ENCODE measurements at regions of chr1 and their contacts with region 1.

Region 1: DNA sequence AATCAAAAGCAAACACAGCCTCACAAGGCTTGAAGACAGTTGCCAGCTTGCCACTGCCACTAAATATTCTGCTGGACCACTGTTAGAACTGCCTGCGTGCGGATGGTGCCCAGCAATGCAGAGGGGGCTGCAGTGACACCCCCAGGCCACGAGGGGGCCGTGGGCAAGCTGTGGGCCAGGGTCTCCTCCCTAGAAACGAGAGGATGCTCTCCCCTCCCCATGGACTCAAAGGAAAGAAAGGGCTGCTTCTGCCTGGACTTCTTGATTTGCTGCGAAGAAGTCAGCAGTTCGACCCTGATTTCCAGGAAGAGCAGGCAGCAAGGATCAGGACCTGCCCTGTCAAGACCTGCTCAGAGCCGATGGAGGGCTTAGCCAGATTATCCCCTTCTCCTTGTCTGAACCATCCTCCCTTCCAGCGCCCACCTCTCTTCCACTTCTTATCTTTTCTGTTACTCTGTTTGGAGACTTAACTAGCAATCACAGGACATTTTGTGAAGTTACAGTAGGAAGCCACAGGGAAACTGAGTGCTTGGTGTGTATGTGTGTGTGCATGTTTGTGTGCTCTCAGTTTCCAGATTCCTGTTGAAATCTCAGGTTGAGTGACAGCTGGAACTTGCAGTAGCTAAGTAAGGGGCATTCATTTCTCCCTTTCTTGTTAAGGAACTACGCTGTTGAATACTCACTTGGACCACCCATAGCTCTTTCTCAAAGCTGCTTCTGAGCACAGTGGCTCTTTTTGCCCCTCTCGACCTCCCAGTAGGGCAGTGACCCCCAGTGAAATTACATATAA is 2.7 kb downstream of the MAN1C1 start:
- DNase-seq: peak; percentile 68
- ATAC-seq: no peak
- H3K4me3 Mint-ChIP-seq: peak overlapping the region; percentile 94
- H3K27ac Mint-ChIP-seq: peak overlapping the region; percentile 95
- H3K4me1 Mint-ChIP-seq: peaks cover 76% of the 10 kb centered on the region
- H3K27me3 Mint-ChIP-seq: no peaks in the 10 kb centered on the region

Region 2: DNA sequence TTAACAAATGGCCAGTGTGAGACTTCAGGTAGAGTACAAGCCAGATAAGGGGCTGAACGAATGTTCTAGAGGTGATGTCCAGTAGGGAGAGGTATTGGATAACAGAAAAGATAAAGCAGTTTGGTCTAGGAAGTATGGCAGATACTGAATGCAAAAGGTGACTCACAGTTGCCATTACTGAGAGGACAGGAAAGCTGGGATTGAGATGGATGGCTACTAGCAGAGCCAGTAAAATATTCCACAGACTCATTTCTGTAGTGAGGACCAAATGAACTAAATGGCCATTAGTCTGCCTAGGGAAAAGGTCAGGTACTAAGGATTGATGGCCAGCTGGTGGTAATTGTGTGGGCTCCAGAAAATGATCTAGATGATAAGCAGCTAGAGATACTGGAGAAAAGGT is 177.1 kb before region 1 on chr1:
- POLR2A ChIA-PET with region 1: no interaction called
- DNase-seq: no peak
- ATAC-seq: no peak
- H3K4me3 Mint-ChIP-seq: no peak overlapping the region
- H3K27ac Mint-ChIP-seq: no peak overlapping the region
- H3K4me1 Mint-ChIP-seq: peaks cover 10% of the 10 kb centered on the region
- H3K27me3 Mint-ChIP-seq: no peaks in the 10 kb centered on the region

Region 3: GRCh38 chr1:25458541-25459298 is 160.6 kb before region 1 on chr1:
- POLR2A ChIA-PET with region 1: no interaction called
- DNase-seq: no peak
- ATAC-seq: no peak
- H3K4me3 Mint-ChIP-seq: no peak overlapping the region
- H3K27ac Mint-ChIP-seq: no peak overlapping the region
- H3K4me1 Mint-ChIP-seq: peaks cover 7% of the 10 kb centered on the region
- H3K27me3 Mint-ChIP-seq: no peaks in the 10 kb centered on the region

Region 4: DNA sequence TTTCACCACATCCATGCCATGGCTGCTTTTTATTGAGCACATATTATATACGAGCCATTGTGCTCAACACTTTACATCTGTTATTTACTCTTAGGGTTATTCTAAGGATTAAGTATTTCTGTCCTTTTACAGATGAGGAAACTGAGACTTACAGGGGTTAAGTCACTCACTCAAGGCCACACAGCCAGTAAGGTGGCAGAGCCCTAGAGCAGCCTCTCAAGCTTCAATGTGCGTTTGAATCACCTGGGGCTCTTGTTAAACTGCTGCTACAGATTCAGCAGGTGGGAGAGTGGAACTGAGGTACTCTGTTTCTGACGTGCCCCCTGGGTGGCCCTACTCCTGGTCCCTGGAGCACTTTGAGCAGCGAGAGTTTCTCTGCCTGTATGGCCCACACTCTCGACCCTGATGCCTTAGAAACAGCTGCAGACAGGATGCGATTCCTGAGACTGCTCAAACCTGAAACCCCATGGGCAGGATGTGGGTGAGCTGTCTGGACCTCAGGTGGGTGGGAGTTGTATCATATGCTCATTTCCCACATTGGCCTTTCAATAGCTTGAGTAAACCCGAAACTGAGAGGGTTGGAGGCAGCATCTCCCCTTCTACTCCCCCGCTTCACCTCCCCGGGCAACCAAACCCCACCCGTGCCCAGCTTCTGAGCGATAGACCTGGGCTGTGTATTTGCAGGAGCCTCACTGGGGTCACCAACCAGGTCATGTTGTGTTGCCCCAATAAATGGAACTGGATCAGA is 56.6 kb after region 1 on chr1:
- POLR2A ChIA-PET with region 1: interaction called, 22 read pairs
- DNase-seq: peak; percentile 87
- ATAC-seq: peak; percentile 89
- H3K4me3 Mint-ChIP-seq: peak overlapping the region; percentile 74
- H3K27ac Mint-ChIP-seq: peak overlapping the region; percentile 39
- H3K4me1 Mint-ChIP-seq: peaks cover 62% of the 10 kb centered on the region
- H3K27me3 Mint-ChIP-seq: peaks cover 34% of the 10 kb centered on the region

Measured in activated naive CD8-positive, alpha-beta T cell treated with anti-CD3 and anti-CD28 coated beads, Interleukin-2, amount 10 ng/mL, durations not matched to agents 7 days and 5 days (primary cell).